IMR-90 (cell line): ENCODE measurements at regions of chr4 and their contacts with region 1.

Region 1: DNA sequence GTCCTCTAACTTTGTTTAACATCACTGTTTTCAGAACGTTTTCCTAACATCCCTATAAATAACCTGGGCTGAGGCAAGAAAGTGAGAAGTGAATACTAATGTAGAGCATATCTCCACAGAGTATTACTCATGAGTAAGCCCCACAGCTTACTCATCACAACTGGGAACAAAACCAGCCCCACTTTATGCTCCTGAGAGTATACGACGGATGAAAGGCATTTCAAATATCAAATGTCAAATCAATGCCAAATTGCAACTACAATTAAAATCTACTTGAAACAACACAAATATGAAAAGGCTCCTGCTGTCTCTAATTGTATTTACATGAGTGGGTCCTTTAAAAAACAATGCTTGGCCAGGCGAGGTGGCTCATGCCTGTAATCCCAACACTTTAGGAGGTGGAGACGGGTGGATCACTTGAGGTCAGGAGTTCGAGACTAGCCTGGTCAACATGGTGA is 41.2 kb downstream of the SH3RF1 start:
- DNase-seq: peak; percentile 96
- ATAC-seq: peak; percentile 84
- H3K4me3 ChIP-seq: no peak overlapping the region
- H3K27ac ChIP-seq: peak overlapping the region; percentile 48; the same call in 1 of the 2 replicates
- H3K4me1 ChIP-seq: peaks cover 16% of the 10 kb centered on the region
- H3K27me3 ChIP-seq: no peaks in the 10 kb centered on the region
- CTCF ChIP-seq: no peak
- POLR2A ChIP-seq: no peak
- RAD21 ChIP-seq: no peak

Region 2: GRCh38 chr4:168631241-168632162 is 598.1 kb before region 1 on chr4:
- CTCF ChIA-PET with region 1: no interaction called
- POLR2A ChIA-PET with region 1: no interaction called
- dilution Hi-C with region 1: no loop called
- in situ Hi-C with region 1: no loop called
- intact Hi-C with region 1: no loop called
- DNase-seq: peak; percentile 55
- ATAC-seq: peak; percentile 78
- H3K4me3 ChIP-seq: peak overlapping the region; percentile 54
- H3K27ac ChIP-seq: peak overlapping the region; percentile 59
- H3K4me1 ChIP-seq: peaks cover 18% of the 10 kb centered on the region
- H3K27me3 ChIP-seq: no peaks in the 10 kb centered on the region
- CTCF ChIP-seq: peak; percentile 45
- POLR2A ChIP-seq: no peak
- RAD21 ChIP-seq: peak; percentile 50

Region 3: DNA sequence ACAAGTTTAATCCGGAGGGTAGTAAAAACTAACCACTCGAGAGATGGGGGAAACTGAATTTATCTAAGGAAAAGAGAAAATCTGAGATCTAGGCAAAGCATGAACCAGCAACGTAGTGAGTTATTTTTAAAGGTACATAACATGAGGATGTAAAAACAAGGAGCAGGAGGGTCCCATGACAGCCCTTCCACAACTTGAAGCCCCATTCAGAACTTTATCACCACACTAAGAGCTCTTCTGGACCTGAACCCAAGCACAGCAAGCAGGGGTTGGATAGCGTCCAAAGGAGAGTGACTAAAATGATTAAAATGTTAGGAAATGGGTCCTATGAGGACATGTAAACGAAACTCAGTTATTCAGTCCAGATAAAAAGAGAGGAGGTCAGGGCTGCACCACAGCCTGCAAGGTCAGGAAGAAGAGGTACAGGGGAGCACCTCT is 25.0 kb after region 1 on chr4:
- CTCF ChIA-PET with region 1: no interaction called
- POLR2A ChIA-PET with region 1: no interaction called
- dilution Hi-C with region 1: no loop called
- in situ Hi-C with region 1: no loop called
- intact Hi-C with region 1: loop called (anchors 2 kb)
- DNase-seq: peak; percentile 87
- ATAC-seq: peak; percentile 50
- H3K4me3 ChIP-seq: no peak overlapping the region
- H3K27ac ChIP-seq: peak overlapping the region; percentile 10; the same call in 1 of the 2 replicates
- H3K4me1 ChIP-seq: peaks cover 29% of the 10 kb centered on the region
- H3K27me3 ChIP-seq: no peaks in the 10 kb centered on the region
- CTCF ChIP-seq: no peak
- POLR2A ChIP-seq: no peak
- RAD21 ChIP-seq: no peak; the same call in 1 of the 2 replicates

Region 4: DNA sequence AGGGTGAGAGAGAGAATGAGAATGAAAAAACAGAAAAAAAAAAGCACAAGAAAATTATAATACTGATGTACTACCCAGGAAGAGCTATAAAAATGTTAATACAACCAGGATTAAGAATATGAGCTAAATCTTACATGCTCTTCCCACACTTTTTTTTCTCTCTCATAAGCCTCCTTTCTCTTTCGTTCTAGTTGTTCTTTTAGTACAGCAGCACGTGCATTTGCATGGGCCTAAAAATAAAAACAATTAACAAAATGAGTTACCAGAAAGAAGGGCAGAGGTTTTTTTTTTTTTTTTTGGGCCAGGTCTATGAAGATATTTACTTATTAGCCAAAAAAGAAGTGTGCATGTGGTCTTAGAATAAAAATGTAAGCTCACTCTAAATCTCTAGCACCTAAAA is 277.3 kb after region 1 on chr4:
- CTCF ChIA-PET with region 1: no interaction called
- POLR2A ChIA-PET with region 1: no interaction called
- dilution Hi-C with region 1: no loop called
- in situ Hi-C with region 1: no loop called
- intact Hi-C with region 1: no loop called
- DNase-seq: no peak
- ATAC-seq: no peak
- H3K4me3 ChIP-seq: no peak overlapping the region
- H3K27ac ChIP-seq: no peak overlapping the region
- H3K4me1 ChIP-seq: no peaks in the 10 kb centered on the region
- H3K27me3 ChIP-seq: no peaks in the 10 kb centered on the region
- CTCF ChIP-seq: no peak
- POLR2A ChIP-seq: no peak
- RAD21 ChIP-seq: no peak